Prostate gland (tissue), 2 donors: ENCODE measurements at regions of chr12 and their contacts with region 1.

Region 1: DNA sequence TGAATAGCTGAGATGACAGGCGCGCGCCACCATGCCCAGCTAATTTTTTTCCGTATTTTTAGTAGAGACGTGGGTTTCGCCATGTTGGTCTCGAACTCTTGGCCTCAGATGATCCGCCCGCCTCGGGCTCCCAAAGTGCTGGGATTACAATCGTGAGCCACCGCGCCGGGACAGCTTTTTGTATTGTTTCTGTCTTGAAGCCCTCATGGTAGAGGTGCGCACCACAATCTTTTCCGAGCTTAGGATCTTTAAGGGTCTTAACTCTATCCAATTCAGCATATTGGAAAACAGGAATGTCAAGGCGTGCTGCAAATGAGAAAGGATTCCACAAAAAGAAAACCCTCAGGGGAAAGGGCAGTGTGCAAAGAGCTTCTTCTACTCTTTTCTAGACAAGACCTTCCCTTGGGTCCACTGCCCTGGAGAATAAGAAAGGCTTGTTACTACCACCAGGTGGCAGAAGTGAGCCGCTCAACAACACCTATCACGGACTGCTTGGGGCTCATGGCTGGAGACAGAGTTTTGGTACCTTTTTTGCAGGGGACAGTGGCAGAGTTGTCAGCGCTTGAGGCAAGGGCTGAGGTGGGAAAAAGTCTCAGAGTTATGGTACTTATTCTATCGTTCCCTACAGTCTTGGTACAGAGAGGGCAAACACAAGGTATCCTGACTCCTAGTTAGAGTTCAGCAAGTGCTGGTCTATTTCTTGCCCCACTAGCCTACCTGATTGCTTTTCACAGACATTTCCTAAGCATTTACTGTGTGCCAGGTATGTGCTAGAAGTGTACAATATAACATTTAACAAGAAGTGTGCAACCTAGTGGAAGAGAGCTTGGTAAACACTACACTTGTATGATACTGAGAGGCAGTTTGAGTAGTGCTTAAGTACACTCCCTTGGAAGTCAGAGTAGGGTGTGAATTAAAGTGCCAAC is 16.4 kb upstream of the SP7 start:
- DNase-seq: peak; percentile 89
- H3K4me3 ChIP-seq: no peak overlapping the region
- H3K27ac ChIP-seq: no peak overlapping the region
- H3K4me1 ChIP-seq: no peaks in the 10 kb centered on the region
- H3K27me3 ChIP-seq: no peaks in the 10 kb centered on the region
- CTCF ChIP-seq: peak; percentile 77 to 98 (median 94)
- POLR2A ChIP-seq: no peak

Region 2: GRCh38 chr12:53424626-53425514 is 72.3 kb after region 1 on chr12:
- intact Hi-C with region 1: loop called (anchors 1 kb)
- DNase-seq: no peak
- H3K4me3 ChIP-seq: no peak overlapping the region
- H3K27ac ChIP-seq: no peak overlapping the region
- H3K4me1 ChIP-seq: no peaks in the 10 kb centered on the region
- H3K27me3 ChIP-seq: no peaks in the 10 kb centered on the region
- CTCF ChIP-seq: no peak
- POLR2A ChIP-seq: no peak

Region 3: GRCh38 chr12:53508534-53509199 is 156.1 kb after region 1 on chr12:
- intact Hi-C with region 1: loop called (anchors 2 kb)
- DNase-seq: peak; percentile 77
- H3K4me3 ChIP-seq: no peak overlapping the region
- H3K27ac ChIP-seq: no peak overlapping the region
- H3K4me1 ChIP-seq: no peaks in the 10 kb centered on the region
- H3K27me3 ChIP-seq: no peaks in the 10 kb centered on the region
- CTCF ChIP-seq: peak; percentile 67 to 92 (median 84)
- POLR2A ChIP-seq: no peak